HepG2 (cell line): ENCODE measurements at regions of chr4 and their contacts with region 1.

Region 1: DNA sequence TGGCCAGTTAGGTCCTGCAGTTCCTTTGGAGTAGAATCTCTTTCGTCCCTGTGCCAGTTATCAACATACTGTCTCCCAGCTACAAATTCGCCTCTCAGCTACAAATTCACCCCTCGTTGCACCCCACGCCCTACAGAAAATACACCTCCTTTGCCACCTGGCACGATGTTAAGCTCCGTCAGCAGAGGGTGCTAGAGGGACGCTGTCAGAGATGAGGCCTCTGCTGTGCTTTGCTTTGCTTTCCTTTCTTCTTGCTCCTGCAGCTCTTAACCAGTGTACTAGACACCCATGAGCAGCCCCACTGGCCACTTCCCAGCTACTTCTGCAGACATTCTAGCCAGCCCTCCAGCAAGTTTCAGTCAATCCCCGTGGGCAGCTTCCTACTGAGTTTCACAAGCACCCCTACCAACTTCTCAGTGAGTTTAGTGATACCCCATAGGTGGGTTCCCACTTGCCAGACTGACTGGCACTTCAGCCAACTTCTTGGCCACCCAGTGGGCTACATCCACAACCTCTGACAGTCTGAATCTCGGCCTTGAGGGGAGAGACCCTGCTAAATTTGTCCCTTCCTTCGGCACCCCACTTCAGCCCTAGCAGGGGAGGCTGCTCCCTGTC is 21.8 kb downstream of the HAUS3 start:
- DNase-seq: peak; percentile 61
- ATAC-seq: peak; percentile 92
- H3K4me3 ChIP-seq: no peak overlapping the region
- H3K27ac ChIP-seq: no peak overlapping the region
- H3K4me1 ChIP-seq: peaks cover 9% of the 10 kb centered on the region
- H3K27me3 ChIP-seq: no peaks in the 10 kb centered on the region
- CTCF ChIP-seq: peak; percentile 96
- EP300 ChIP-seq: no peak
- POLR2A ChIP-seq: no peak
- RAD21 ChIP-seq: peak; percentile 83

Region 2: GRCh38 chr4:2151544-2151943 is 68.6 kb before region 1 on chr4:
- CTCF ChIA-PET with region 1: no interaction called
- POLR2A ChIA-PET with region 1: no interaction called
- in situ Hi-C with region 1: no loop called
- intact Hi-C with region 1: no loop called
- DNase-seq: no peak
- ATAC-seq: peak; percentile 60
- H3K4me3 ChIP-seq: no peak overlapping the region
- H3K27ac ChIP-seq: no peak overlapping the region
- H3K4me1 ChIP-seq: no peaks in the 10 kb centered on the region
- H3K27me3 ChIP-seq: no peaks in the 10 kb centered on the region
- CTCF ChIP-seq: no peak
- EP300 ChIP-seq: no peak
- POLR2A ChIP-seq: no peak
- RAD21 ChIP-seq: no peak

Region 3: DNA sequence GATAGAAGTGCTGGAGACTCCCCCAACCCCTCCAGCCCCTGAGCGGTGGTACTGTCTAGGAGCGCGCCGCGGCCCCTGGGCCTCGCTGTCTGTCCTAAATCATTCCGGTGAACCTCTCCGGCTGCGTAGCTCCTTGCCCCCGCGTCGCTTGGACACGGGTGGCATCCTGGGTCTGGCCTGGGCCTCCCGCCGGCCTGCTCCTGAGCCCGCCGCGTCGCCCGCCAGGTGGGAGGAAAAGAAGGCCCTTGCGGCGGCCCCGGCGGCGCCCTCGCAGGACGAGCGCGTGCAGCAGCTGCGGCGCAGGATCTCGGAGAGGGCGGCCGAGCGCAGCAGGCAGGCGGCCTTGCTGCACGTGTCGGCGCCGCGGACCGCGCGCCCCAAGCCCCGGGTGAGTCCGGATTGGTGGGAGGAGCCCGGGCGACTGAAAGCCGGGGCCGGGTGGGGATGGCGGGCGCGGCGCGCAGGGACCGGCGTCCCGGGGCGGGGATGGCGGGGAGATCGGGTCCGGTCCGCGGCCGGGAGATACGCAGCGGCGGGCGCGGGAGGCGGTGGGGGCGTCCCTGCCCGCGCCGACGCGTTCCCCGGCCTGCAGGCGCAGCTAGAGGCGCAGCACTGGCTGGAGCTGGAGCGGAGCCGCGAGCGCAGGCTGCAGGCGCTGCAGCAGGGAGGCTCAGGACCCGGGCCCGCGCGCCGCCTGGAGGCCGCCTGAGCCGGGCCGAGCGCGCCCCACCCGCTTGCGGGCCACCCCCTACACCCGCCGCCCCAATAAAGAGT is 242.3 kb after region 1 on chr4:
- CTCF ChIA-PET with region 1: interaction called, 4 read pairs
- POLR2A ChIA-PET with region 1: no interaction called
- in situ Hi-C with region 1: no loop called
- intact Hi-C with region 1: loop called (anchors 1 kb)
- DNase-seq: peak; percentile 30
- ATAC-seq: peak; percentile 91
- H3K4me3 ChIP-seq: peak overlapping the region; percentile 37 to 66 (median 48); a peak in 4 of 6 replicates
- H3K27ac ChIP-seq: no peak overlapping the region
- H3K4me1 ChIP-seq: peaks cover 45% of the 10 kb centered on the region
- H3K27me3 ChIP-seq: peaks cover 6 to 43% of the 10 kb centered on the region in 2 experiments
- CTCF ChIP-seq: peak; percentile 60
- EP300 ChIP-seq: no peak
- POLR2A ChIP-seq: no peak
- RAD21 ChIP-seq: peak; percentile 79